ENCODE measurements at regions of chr20 and their contacts with region 1.

Region 1: GRCh38 chr20:5529331-5530148 is 212.8 kb upstream of the PROKR2 start:
- DNase-seq: peak; percentile 71 to 85 (median 80)
- ATAC-seq: peak; percentile 95
- H3K4me3 ChIP-seq: peak overlapping the region; percentile 14
- H3K4me3 Mint-ChIP-seq: peak overlapping the region in 9 of 10 donors; percentile 13 to 78 (median 69)
- H3K27ac ChIP-seq: peak overlapping the region; percentile 42
- H3K27ac Mint-ChIP-seq: peak overlapping the region; percentile 17 to 93 (median 71)
- H3K4me1 ChIP-seq: peaks cover 3 to 8% of the 10 kb centered on the region in 2 donors
- H3K4me1 Mint-ChIP-seq: peaks cover 12 to 23% (median 16%) of the 10 kb centered on the region in 7 donors
- H3K27me3 ChIP-seq: no peaks in the 10 kb centered on the region
- H3K27me3 Mint-ChIP-seq: no peaks in the 10 kb centered on the region

Region 2: GRCh38 chr20:5539691-5540090 is 10.2 kb after region 1 on chr20:
- CTCF ChIA-PET with region 1: interaction called, 14 read pairs
- POLR2A ChIA-PET with region 1: no interaction called
- intact Hi-C with region 1: no loop called
- DNase-seq: no peak
- ATAC-seq: no peak
- H3K4me3 ChIP-seq: no peak overlapping the region
- H3K4me3 Mint-ChIP-seq: no peak overlapping the region
- H3K27ac ChIP-seq: no peak overlapping the region
- H3K27ac Mint-ChIP-seq: peak overlapping the region in 1 of 9 donors; percentile 84
- H3K4me1 ChIP-seq: no peaks in the 10 kb centered on the region
- H3K4me1 Mint-ChIP-seq: peaks cover 0 to 8% (median 5%) of the 10 kb centered on the region in 7 donors
- H3K27me3 ChIP-seq: no peaks in the 10 kb centered on the region
- H3K27me3 Mint-ChIP-seq: no peaks in the 10 kb centered on the region

Region 3: GRCh38 chr20:5569021-5569420 is 39.5 kb after region 1 on chr20:
- CTCF ChIA-PET with region 1: interaction called, 10 read pairs
- POLR2A ChIA-PET with region 1: no interaction called
- intact Hi-C with region 1: loop called (anchors 1 kb)
- DNase-seq: peak in 7 of 9 donors; percentile 56 to 75 (median 67)
- ATAC-seq: peak; percentile 77
- H3K4me3 ChIP-seq: no peak overlapping the region
- H3K4me3 Mint-ChIP-seq: peak overlapping the region in 8 of 10 donors; percentile 22 to 83 (median 49)
- H3K27ac ChIP-seq: peak overlapping the region; percentile 58
- H3K27ac Mint-ChIP-seq: peak overlapping the region; percentile 6 to 96 (median 90)
- H3K4me1 ChIP-seq: peaks cover 0 to 17% of the 10 kb centered on the region in 2 donors
- H3K4me1 Mint-ChIP-seq: peaks cover 20 to 59% (median 36%) of the 10 kb centered on the region in 7 donors
- H3K27me3 ChIP-seq: no peaks in the 10 kb centered on the region
- H3K27me3 Mint-ChIP-seq: no peaks in the 10 kb centered on the region

Region 4: DNA sequence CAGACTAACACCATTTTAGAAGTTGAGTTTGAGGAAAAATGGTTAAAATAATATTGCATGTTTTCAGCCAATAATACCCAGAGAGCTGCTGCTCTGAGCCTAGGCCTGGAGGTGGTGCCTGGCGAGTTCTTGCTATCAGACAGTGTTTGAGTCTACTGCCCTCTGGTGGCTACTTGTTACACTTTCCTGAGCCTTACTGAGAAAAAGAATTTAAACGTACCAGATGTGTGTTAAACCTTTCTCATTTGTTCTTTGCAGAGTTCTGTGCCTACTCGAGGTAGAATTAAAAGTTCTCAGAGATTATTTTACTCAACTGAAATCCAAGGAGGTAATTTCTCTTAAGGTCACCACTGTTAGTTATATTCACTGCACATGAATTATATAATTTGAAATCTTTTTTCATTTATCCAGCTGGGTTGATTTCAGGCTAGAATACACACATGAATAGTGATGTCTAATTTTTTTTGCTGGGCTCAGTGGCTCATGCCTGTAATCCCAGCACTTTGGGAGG is 258.9 kb after region 1 on chr20:
- CTCF ChIA-PET with region 1: interaction called, 66 read pairs
- POLR2A ChIA-PET with region 1: interaction called, 4 read pairs
- intact Hi-C with region 1: loop called (anchors 1 kb)
- DNase-seq: peak; percentile 21 to 88 (median 83)
- ATAC-seq: peak; percentile 100
- H3K4me3 ChIP-seq: no peak overlapping the region
- H3K4me3 Mint-ChIP-seq: no peak overlapping the region
- H3K27ac ChIP-seq: no peak overlapping the region
- H3K27ac Mint-ChIP-seq: peak overlapping the region in 6 of 9 donors; percentile 8 to 89 (median 68)
- H3K4me1 ChIP-seq: no peaks in the 10 kb centered on the region
- H3K4me1 Mint-ChIP-seq: peaks cover 0 to 22% (median 9%) of the 10 kb centered on the region in 7 donors
- H3K27me3 ChIP-seq: no peaks in the 10 kb centered on the region
- H3K27me3 Mint-ChIP-seq: no peaks in the 10 kb centered on the region

Region 5: GRCh38 chr20:5933802-5934436 is 404.4 kb after region 1 on chr20:
- CTCF ChIA-PET with region 1: no interaction called
- POLR2A ChIA-PET with region 1: no interaction called
- intact Hi-C with region 1: loop called (anchors 1 kb)
- DNase-seq: peak in 1 of 9 donors; percentile 36
- ATAC-seq: peak; percentile 44
- H3K4me3 ChIP-seq: no peak overlapping the region
- H3K4me3 Mint-ChIP-seq: no peak overlapping the region
- H3K27ac ChIP-seq: no peak overlapping the region
- H3K27ac Mint-ChIP-seq: peak overlapping the region in 2 of 9 donors; percentile 18 to 32
- H3K4me1 ChIP-seq: no peaks in the 10 kb centered on the region
- H3K4me1 Mint-ChIP-seq: peaks cover 0 to 9% (median 0%) of the 10 kb centered on the region in 7 donors
- H3K27me3 ChIP-seq: no peaks in the 10 kb centered on the region
- H3K27me3 Mint-ChIP-seq: peaks cover 0 to 9% (median 3%) of the 10 kb centered on the region in 5 donors

Region 6: DNA sequence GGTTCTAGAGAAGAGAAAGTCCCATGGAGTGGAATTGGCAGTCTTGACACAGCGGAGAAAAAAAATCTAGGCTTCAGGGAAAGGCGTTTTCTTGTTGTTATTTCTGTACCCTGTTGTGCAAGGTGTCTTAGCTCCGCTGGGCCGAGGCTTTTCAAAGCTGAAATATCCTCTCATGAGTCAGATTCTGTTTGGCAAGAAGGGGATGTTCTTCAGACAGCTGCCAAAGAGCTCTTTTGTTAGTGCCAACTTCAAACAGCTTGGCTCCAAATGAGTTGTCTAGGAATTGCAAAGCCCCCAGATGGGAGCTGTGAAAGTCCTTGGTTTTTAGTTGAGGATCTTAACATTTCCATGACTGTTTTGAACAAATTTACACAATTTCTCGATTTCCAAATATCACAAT is 478.7 kb after region 1 on chr20:
- CTCF ChIA-PET with region 1: interaction called, 5 read pairs
- POLR2A ChIA-PET with region 1: interaction called, 3 read pairs
- intact Hi-C with region 1: loop called (anchors 1 kb)
- DNase-seq: no peak
- ATAC-seq: no peak
- H3K4me3 ChIP-seq: no peak overlapping the region
- H3K4me3 Mint-ChIP-seq: peak overlapping the region; percentile 58 to 99 (median 96)
- H3K27ac ChIP-seq: no peak overlapping the region
- H3K27ac Mint-ChIP-seq: peak overlapping the region in 8 of 9 donors; percentile 10 to 77 (median 39)
- H3K4me1 ChIP-seq: peaks cover 3 to 16% of the 10 kb centered on the region in 2 donors
- H3K4me1 Mint-ChIP-seq: peaks cover 30 to 68% (median 44%) of the 10 kb centered on the region in 7 donors
- H3K27me3 ChIP-seq: no peaks in the 10 kb centered on the region
- H3K27me3 Mint-ChIP-seq: no peaks in the 10 kb centered on the region

Region 7: GRCh38 chr20:6142348-6142993 is 612.9 kb after region 1 on chr20:
- CTCF ChIA-PET with region 1: no interaction called
- POLR2A ChIA-PET with region 1: no interaction called
- intact Hi-C with region 1: loop called in 1 of 2 experiments (anchors 5 kb)
- DNase-seq: peak in 6 of 9 donors; percentile 14 to 48 (median 29)
- ATAC-seq: peak; percentile 52
- H3K4me3 ChIP-seq: no peak overlapping the region
- H3K4me3 Mint-ChIP-seq: no peak overlapping the region
- H3K27ac ChIP-seq: no peak overlapping the region
- H3K27ac Mint-ChIP-seq: no peak overlapping the region
- H3K4me1 ChIP-seq: no peaks in the 10 kb centered on the region
- H3K4me1 Mint-ChIP-seq: no peaks in the 10 kb centered on the region
- H3K27me3 ChIP-seq: no peaks in the 10 kb centered on the region
- H3K27me3 Mint-ChIP-seq: peaks cover 0 to 40% (median 29%) of the 10 kb centered on the region in 5 donors